ENCODE measurements at regions of chr11 and their contacts with region 1.

Region 1: DNA sequence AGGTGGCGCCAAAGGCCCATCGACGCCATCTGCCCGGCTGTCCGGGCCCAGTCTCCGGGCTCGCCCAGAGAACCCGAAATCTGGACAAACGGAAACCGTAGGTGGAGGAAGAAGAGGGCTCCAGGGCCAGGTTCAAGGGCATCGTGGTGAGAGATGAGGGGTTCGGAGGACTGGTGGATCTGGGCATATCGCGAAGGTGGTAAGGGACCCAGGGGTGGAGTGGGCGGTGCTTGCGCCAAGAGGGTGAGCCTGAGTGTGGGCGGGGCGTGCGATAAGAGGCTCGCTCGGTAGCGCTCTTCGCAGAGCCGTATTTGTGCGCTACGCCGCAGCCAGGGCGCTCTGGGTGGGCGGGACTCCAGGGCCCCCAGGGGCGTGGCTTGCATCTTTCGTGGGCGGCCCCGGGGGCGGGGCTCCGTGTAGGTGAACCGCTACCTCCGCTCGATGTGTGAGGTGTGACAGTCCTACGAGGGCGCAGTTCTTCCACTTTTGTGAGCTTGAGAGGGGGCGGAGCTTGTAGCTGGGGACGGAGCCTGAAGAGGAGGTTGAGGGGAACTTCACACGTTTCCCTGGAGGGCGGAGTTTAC is 4.8 kb downstream of the CD248 start:
- DNase-seq: peak; percentile 92
- H3K4me3 Mint-ChIP-seq: peak overlapping the region; percentile 79
- H3K27ac Mint-ChIP-seq: peak overlapping the region; percentile 81
- H3K4me1 Mint-ChIP-seq: peaks cover 12% of the 10 kb centered on the region
- H3K27me3 Mint-ChIP-seq: no peaks in the 10 kb centered on the region
- CTCF ChIP-seq: peak; percentile 97

Region 2: GRCh38 chr11:66218846-66219620 is 93.0 kb before region 1 on chr11:
- CTCF ChIA-PET with region 1: no interaction called
- POLR2A ChIA-PET with region 1: no interaction called
- intact Hi-C with region 1: no loop called
- DNase-seq: no peak
- H3K4me3 Mint-ChIP-seq: no peak overlapping the region
- H3K27ac Mint-ChIP-seq: no peak overlapping the region
- H3K4me1 Mint-ChIP-seq: peaks cover 6% of the 10 kb centered on the region
- H3K27me3 Mint-ChIP-seq: no peaks in the 10 kb centered on the region
- CTCF ChIP-seq: no peak

Region 3: GRCh38 chr11:66288671-66289547 is 23.1 kb before region 1 on chr11 and contains the start of gene YIF1A:
- CTCF ChIA-PET with region 1: interaction called, 7 read pairs
- POLR2A ChIA-PET with region 1: interaction called, 19 read pairs
- intact Hi-C with region 1: loop called (anchors 2 kb)
- DNase-seq: peak; percentile 99
- H3K4me3 Mint-ChIP-seq: peak within 1 kb of the TSS; percentile 90
- H3K27ac Mint-ChIP-seq: peak within 1 kb of the TSS; percentile 95
- H3K4me1 Mint-ChIP-seq: peaks cover 12% of the 10 kb centered on the region
- H3K27me3 Mint-ChIP-seq: peaks cover 13% of the 10 kb centered on the region
- CTCF ChIP-seq: no peak
- total RNA-seq, gene YIF1A: 143 and 144 TPM in 2 replicates

Region 4: GRCh38 chr11:66328307-66329144 is 16.5 kb after region 1 on chr11:
- CTCF ChIA-PET with region 1: interaction called, 48 read pairs
- POLR2A ChIA-PET with region 1: interaction called, 45 read pairs
- intact Hi-C with region 1: loop called (anchors 1 kb)
- DNase-seq: peak; percentile 78
- H3K4me3 Mint-ChIP-seq: no peak overlapping the region
- H3K27ac Mint-ChIP-seq: peak overlapping the region; percentile 4
- H3K4me1 Mint-ChIP-seq: peaks cover 46% of the 10 kb centered on the region
- H3K27me3 Mint-ChIP-seq: no peaks in the 10 kb centered on the region
- CTCF ChIP-seq: peak; percentile 91

Region 5: DNA sequence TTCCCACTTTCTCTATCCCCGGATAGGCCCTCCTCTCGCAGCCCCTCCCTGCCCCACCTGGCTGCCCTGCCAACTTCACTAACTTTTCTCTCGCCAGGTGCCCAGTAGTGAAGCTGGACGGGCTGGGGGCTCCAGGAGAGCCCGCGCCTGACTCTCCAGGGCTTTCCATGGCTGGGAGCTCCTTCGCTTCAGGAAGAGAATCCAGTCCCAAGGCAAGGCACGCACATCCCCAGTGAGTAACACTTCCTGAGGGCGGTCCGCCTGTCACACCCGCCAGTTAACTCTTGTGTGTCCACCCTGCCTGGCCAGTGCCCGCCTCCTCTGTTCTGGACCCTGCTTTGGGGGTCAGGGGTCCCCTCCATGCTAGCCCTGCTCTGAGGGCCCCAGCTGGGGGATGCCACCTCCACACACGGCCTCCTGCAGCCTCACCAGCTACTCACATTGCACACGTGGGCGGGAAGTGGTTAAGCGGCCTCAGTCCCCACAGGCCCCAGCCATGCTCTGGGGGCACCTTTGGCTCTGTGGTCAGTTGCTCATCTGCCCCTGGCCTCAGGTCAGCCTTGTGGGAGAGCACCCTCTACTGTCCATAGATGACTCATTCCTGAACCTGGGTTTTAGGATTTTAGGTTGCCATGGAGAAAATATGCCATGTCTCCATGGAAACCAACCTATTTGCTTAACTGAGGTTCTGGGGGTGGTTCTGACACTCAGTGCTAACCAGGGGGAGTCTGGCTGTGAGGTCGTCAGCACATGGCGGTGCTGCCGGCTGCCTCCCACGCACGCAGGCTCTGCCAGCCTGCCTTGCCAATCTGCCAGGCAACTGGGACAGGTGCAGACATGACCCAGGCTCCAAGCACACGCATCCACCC is 24.4 kb after region 1 on chr11 and contains the start of gene RIN1:
- CTCF ChIA-PET with region 1: interaction called, 48 read pairs
- POLR2A ChIA-PET with region 1: interaction called, 45 read pairs
- intact Hi-C with region 1: loop called (anchors 1 kb)
- DNase-seq: peak; percentile 96
- H3K4me3 Mint-ChIP-seq: peak within 1 kb of the TSS; percentile 89
- H3K27ac Mint-ChIP-seq: peak within 1 kb of the TSS; percentile 95
- H3K4me1 Mint-ChIP-seq: peaks cover 30% of the 10 kb centered on the region
- H3K27me3 Mint-ChIP-seq: no peaks in the 10 kb centered on the region
- CTCF ChIP-seq: no peak
- total RNA-seq, gene RIN1: 38.7 and 50.2 TPM in 2 replicates

Region 6: GRCh38 chr11:66386171-66387069 is 74.4 kb after region 1 on chr11:
- CTCF ChIA-PET with region 1: interaction called, 25 read pairs
- POLR2A ChIA-PET with region 1: interaction called, 6 read pairs
- intact Hi-C with region 1: loop called (anchors 1 kb)
- DNase-seq: peak; percentile 89
- H3K4me3 Mint-ChIP-seq: peak overlapping the region; percentile 38
- H3K27ac Mint-ChIP-seq: peak overlapping the region; percentile 21
- H3K4me1 Mint-ChIP-seq: peaks cover 6% of the 10 kb centered on the region
- H3K27me3 Mint-ChIP-seq: peaks cover 16% of the 10 kb centered on the region
- CTCF ChIP-seq: peak; percentile 77

Region 7: GRCh38 chr11:66438504-66439466 is 126.7 kb after region 1 on chr11 and contains the start of gene MRPL11:
- CTCF ChIA-PET with region 1: interaction called, 4 read pairs
- POLR2A ChIA-PET with region 1: no interaction called
- intact Hi-C with region 1: loop called (anchors 2 kb)
- DNase-seq: peak; percentile 95
- H3K4me3 Mint-ChIP-seq: peak within 1 kb of the TSS; percentile 84
- H3K27ac Mint-ChIP-seq: peak within 1 kb of the TSS; percentile 97
- H3K4me1 Mint-ChIP-seq: peaks cover 18% of the 10 kb centered on the region
- H3K27me3 Mint-ChIP-seq: no peaks in the 10 kb centered on the region
- CTCF ChIP-seq: peak; percentile 62
- total RNA-seq, gene MRPL11: 65.5 and 69.1 TPM in 2 replicates